ENCODE measurements at regions of chr2 and their contacts with region 1.

Region 1: DNA sequence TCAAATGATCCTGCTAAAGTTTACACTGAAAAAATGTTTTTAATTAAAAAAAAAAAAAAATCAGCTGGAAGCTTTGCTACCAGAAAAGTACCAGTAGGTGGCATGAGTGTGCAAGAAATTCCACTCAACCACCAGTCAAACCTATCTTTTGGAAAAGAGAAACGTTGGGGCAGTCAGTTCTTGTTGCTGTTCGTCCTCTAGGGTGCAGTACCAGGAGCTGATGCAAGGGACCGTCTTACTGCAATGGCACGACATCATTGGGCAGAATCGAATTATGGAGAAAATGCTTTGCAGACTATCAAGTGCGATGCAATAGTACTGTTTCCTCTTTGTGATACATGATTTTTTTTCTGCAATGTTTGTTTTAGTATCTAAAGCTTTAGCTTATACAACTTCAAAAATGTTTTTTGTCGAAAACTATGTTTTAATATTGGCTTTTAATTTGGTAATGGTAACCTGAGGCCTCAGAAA is 18.3 kb downstream of the YPEL5 start:
- DNase-seq: peak; percentile 89
- ATAC-seq: peak; percentile 97
- H3K4me3 ChIP-seq: no peak overlapping the region
- H3K27ac ChIP-seq: no peak overlapping the region
- H3K4me1 ChIP-seq: no peaks in the 10 kb centered on the region
- H3K27me3 ChIP-seq: no peaks in the 10 kb centered on the region
- CTCF ChIP-seq: peak; percentile 96

Region 2: DNA sequence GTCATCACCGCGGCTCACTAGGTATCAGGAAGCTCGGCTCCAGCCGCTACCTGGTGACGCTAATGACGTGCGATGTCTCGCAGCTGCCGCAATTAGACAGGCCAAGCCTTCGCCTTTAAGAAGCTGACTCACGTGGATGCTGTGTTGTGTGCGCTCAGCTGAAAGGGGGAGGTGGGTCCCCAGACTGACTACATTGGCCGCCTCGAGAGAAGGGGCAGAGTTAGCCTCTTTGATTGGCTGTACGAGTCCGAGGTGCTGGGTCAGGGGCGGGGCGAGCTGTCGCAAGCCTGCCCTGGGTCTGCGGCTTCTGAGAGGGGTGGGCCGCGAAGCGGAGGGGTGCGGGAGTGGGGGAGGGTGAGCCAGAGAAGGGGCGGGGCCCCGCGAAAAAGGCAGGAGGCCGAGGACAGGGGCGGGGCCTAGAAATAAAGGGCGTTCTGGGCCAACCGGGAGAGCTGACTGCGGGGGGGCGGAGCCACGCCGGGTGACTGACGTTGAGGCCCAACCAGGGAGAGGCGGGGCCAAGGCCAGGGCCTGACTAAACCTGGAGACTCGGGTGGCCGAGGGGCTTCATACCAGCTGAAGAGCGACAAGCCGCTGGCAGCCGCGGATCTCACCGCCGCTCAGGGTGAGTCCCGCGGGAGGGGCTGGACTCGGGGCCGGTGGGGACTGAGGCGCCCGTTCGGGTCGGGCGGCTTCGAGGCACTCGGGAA is 18.5 kb before region 1 on chr2 and contains the start of gene YPEL5:
- CTCF ChIA-PET with region 1: interaction called, 13 read pairs
- POLR2A ChIA-PET with region 1: interaction called, 4 read pairs
- intact Hi-C with region 1: no loop called
- DNase-seq: peak; percentile 96
- ATAC-seq: peak; percentile 94
- H3K4me3 ChIP-seq: peak within 1 kb of the TSS; percentile 93
- H3K27ac ChIP-seq: no peak within 1 kb of the TSS
- H3K4me1 ChIP-seq: peaks cover 37% of the 10 kb centered on the region
- H3K27me3 ChIP-seq: no peaks in the 10 kb centered on the region
- CTCF ChIP-seq: no peak
- total RNA-seq, gene YPEL5: 29.9 TPM in 2 replicates

Region 3: DNA sequence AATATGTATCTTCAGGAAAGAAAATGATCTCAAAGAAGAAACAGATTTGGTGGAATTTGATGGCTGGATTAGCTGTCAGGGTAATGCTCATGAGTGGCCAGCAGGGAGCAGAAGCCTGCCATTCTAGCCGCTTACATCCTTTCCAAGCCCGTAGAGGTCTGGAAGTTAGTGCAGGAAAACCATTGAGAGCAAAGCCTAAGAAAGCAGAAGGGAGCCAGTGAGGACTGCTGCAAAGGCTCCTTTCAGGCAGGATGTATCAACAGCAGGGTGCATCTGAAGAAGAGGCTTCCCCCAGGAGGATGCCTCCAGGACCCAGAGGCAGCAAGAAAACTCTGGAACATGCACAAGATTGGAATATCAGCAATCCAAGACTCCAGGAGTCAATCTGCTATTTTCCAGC is 43.4 kb after region 1 on chr2:
- CTCF ChIA-PET with region 1: interaction called, 8 read pairs
- POLR2A ChIA-PET with region 1: no interaction called
- intact Hi-C with region 1: loop called (anchors 2 kb)
- DNase-seq: peak; percentile 76
- ATAC-seq: peak; percentile 87
- H3K4me3 ChIP-seq: no peak overlapping the region
- H3K27ac ChIP-seq: no peak overlapping the region
- H3K4me1 ChIP-seq: no peaks in the 10 kb centered on the region
- H3K27me3 ChIP-seq: peaks cover 26% of the 10 kb centered on the region; the same call in 1 of the 2 replicates
- CTCF ChIP-seq: peak; percentile 93

Region 4: DNA sequence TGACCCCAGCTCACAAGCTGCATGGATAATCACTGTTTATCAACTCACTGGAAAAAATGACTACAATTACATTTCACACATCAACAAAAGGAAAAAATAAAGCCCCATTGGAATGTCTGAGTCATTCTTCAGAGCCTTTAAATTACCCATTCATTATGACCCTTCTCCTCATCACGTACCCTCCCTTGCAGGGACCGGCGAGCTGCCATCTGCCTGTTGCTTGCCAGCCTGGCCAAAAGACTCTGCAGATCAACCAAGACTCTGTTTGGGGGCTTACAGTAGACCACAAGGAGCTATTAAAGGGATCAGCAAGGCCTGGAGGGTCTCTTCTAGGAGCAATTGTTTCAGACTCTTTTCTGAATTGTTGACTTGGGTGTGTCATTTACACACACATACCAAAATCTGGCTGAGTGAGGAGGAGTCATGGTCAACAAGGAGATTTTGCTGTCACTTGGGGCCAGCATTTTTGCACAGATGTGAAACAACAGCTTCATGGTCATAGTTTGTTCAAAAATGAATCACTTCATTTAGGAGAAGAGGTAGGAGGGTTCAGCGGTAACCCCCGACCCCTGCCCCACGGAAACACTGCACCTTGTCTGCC is 108.3 kb after region 1 on chr2:
- CTCF ChIA-PET with region 1: interaction called, 11 read pairs
- POLR2A ChIA-PET with region 1: no interaction called
- intact Hi-C with region 1: no loop called
- DNase-seq: peak; percentile 79
- ATAC-seq: peak; percentile 40
- H3K4me3 ChIP-seq: peak overlapping the region; percentile 17; the same call in 1 of the 2 replicates
- H3K27ac ChIP-seq: peak overlapping the region; percentile 73
- H3K4me1 ChIP-seq: peaks cover 26% of the 10 kb centered on the region
- H3K27me3 ChIP-seq: no peaks in the 10 kb centered on the region
- CTCF ChIP-seq: no peak

Region 5: GRCh38 chr2:30862054-30862651 is 697.1 kb after region 1 on chr2:
- CTCF ChIA-PET with region 1: no interaction called
- POLR2A ChIA-PET with region 1: no interaction called
- intact Hi-C with region 1: loop called (anchors 10 kb)
- DNase-seq: peak; percentile 84
- ATAC-seq: peak; percentile 46
- H3K4me3 ChIP-seq: no peak overlapping the region
- H3K27ac ChIP-seq: no peak overlapping the region
- H3K4me1 ChIP-seq: no peaks in the 10 kb centered on the region
- H3K27me3 ChIP-seq: no peaks in the 10 kb centered on the region
- CTCF ChIP-seq: peak; percentile 69

Measured in PC-3 (cell line).